Activated CD4-positive, alpha-beta T cell treated with anti-CD3 and anti-CD28 coated beads for 36 hours (primary cell): ENCODE measurements at regions of chr11 and their contacts with region 1.

Region 1: DNA sequence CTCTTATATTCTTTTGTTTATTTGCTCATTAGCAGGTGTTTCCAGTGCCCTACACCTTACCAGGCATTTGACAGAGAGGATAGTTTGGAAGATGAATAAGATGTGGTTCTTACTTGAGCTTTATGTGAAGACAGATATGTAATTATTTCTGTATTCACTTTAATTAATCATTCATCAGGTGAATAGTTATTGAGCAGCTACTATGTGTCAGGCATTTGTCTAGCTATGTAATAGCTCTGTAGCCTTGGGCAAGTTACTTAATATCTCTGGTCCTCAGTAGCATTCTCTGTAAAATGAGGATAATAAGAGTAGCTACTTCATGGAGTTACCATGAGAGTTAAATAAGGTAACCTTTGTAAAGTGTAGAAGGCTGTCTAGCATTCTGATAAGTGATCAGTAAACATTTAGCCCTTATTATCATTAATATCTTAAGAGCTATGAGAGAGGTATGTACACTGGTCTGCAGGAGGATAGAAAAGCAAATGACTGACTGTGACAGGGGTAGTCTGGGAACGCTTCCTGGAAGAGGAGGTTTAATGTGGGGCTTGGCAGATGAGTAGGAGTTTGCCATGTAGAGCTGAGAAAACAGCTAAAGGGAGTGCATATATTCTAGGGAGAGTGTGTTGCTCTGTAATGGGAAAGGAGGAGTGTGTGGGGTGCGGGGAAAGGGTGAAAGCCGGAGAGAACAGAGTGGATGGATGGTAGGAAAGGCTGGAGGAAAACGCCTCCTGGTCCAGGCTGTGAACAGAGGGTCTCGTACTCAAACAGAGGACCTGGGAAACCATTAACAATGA is 56.1 kb downstream of the MICAL2 start:
- DNase-seq: no peak
- ATAC-seq: no peak
- H3K4me3 Mint-ChIP-seq: no peak overlapping the region
- H3K27ac Mint-ChIP-seq: peak overlapping the region; percentile 74
- H3K4me1 Mint-ChIP-seq: peaks cover 39% of the 10 kb centered on the region
- H3K27me3 Mint-ChIP-seq: no peaks in the 10 kb centered on the region

Region 2: DNA sequence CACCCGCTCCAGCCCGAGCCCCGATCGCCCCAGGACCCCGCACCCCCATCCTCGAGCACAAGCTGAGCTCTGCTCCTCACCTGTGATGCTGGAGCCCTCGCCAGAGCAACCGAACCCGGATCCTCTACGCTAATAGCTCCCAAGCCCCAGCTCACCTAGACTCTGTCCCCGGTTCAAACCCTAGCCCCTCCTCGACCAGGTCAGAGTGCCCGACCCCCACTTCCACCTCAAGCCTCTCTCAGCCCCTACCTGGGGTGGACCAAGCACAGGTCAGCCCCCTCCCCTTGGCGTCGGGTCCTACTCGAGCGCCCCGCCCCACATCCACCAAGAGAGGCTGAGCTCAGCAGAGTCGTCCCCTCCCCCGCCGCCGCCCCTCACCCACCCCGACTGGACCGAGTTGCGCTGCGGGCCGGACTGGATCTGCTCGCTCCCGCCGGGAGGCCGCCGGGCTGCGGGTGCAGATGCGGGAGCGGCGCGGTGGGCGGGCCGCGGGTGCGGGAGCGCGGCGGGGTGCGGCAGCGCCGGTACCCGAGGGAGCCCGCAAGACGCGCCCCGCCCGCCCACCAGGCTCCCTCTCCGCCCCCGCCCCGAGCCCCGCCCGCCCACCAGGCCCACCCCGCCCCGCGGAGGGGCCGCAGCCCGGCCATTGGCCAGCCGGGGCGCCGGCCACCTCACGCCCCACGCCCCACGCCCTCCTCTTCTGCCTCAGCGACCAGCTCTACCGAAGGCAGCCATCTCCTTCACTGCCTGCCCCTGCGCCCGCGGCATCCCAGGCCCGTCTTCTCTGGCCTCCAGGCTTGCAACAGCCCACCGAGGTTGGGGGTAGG is 157.5 kb before region 1 on chr11:
- CTCF ChIA-PET with region 1: no interaction called
- POLR2A ChIA-PET with region 1: no interaction called
- intact Hi-C with region 1: no loop called
- DNase-seq: peak; percentile 11
- ATAC-seq: peak; percentile 19
- H3K4me3 Mint-ChIP-seq: peak overlapping the region; percentile 55
- H3K27ac Mint-ChIP-seq: no peak overlapping the region
- H3K4me1 Mint-ChIP-seq: peaks cover 11% of the 10 kb centered on the region
- H3K27me3 Mint-ChIP-seq: peaks cover 66% of the 10 kb centered on the region

Region 3: GRCh38 chr11:12180257-12181205 is 14.0 kb after region 1 on chr11:
- CTCF ChIA-PET with region 1: interaction called, 4 read pairs
- POLR2A ChIA-PET with region 1: interaction called, 12 read pairs
- intact Hi-C with region 1: no loop called
- DNase-seq: no peak
- ATAC-seq: no peak
- H3K4me3 Mint-ChIP-seq: no peak overlapping the region
- H3K27ac Mint-ChIP-seq: no peak overlapping the region
- H3K4me1 Mint-ChIP-seq: peaks cover 45% of the 10 kb centered on the region
- H3K27me3 Mint-ChIP-seq: no peaks in the 10 kb centered on the region